ENCODE measurements at regions of chr2 and their contacts with region 1.

Region 1: GRCh38 chr2:118221666-118222594 is 133.7 kb downstream of the INSIG2 start:
- DNase-seq: peak; percentile 59
- H3K4me3 ChIP-seq: no peak overlapping the region
- H3K27ac ChIP-seq: no peak overlapping the region
- H3K4me1 ChIP-seq: peaks cover 6% of the 10 kb centered on the region
- H3K27me3 ChIP-seq: peaks cover 24% of the 10 kb centered on the region
- CTCF ChIP-seq: peak; percentile 79 to 80

Region 2: GRCh38 chr2:118269408-118270051 is 47.6 kb after region 1 on chr2:
- CTCF ChIA-PET with region 1: no interaction called
- dilution Hi-C with region 1: loop called (anchors 5 kb)
- in situ Hi-C with region 1: no loop called
- intact Hi-C with region 1: loop called (anchors 1 kb)
- DNase-seq: no peak
- H3K4me3 ChIP-seq: no peak overlapping the region
- H3K27ac ChIP-seq: no peak overlapping the region
- H3K4me1 ChIP-seq: no peaks in the 10 kb centered on the region
- H3K27me3 ChIP-seq: peaks cover 6% of the 10 kb centered on the region
- CTCF ChIP-seq: peak; percentile 31 to 49

Region 3: GRCh38 chr2:118492335-118492734 is 270.4 kb after region 1 on chr2:
- CTCF ChIA-PET with region 1: no interaction called
- dilution Hi-C with region 1: no loop called
- in situ Hi-C with region 1: no loop called
- intact Hi-C with region 1: loop called (anchors 10 kb)
- DNase-seq: peak; percentile 25
- H3K4me3 ChIP-seq: no peak overlapping the region
- H3K27ac ChIP-seq: no peak overlapping the region
- H3K4me1 ChIP-seq: peaks cover 7% of the 10 kb centered on the region
- H3K27me3 ChIP-seq: no peaks in the 10 kb centered on the region
- CTCF ChIP-seq: peak; percentile 26 to 32